PC-9 (cell line): ENCODE measurements at regions of chr5 and their contacts with region 1.

Region 1: DNA sequence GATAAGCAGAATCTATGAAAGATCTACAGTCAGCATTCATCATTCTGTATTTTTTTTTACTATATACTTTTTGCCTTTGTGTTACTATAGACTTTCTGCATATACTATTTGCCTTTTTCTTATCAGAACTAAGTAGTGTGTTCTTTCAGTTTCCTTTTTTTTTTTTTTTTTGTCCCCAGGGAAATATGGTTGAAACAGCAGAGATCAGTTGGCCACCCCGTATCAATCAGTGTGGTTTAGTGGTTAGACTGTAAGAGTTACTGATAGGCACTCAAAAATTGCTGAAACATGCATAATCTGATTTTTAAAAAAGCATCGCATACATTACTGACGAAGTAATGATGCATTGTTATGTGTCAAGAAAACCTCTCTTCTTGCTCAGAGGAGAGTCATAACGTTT is 990.8 kb upstream of the EDIL3 start:
- DNase-seq: no peak
- H3K4me3 ChIP-seq: no peak overlapping the region
- H3K27ac ChIP-seq: no peak overlapping the region
- H3K4me1 ChIP-seq: no peaks in the 10 kb centered on the region
- H3K27me3 ChIP-seq: no peaks in the 10 kb centered on the region
- CTCF ChIP-seq: no peak

Region 2: DNA sequence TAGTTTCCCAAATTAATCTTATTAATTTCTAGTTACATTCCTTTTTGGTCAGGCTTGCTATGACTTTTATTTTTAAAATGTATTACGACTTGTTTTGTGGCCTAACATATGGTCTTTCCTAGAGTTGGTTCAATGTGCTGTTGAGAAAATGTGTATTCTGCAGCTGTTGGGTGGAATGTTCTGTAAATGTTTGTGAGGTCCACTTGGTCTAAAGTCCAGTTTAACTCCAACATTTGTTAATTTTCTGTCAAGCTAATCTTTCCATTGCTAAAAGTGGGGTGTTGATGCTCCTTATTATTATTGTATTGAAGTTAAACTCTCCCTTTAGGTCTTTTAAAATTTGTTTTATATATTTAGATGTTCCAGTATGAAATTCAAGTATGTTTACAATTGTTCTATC is 20.0 kb after region 1 on chr5:
- CTCF ChIA-PET with region 1: no interaction called
- POLR2A ChIA-PET with region 1: no interaction called
- intact Hi-C with region 1: loop called (anchors 1 kb)
- DNase-seq: no peak
- H3K4me3 ChIP-seq: no peak overlapping the region
- H3K27ac ChIP-seq: no peak overlapping the region
- H3K4me1 ChIP-seq: no peaks in the 10 kb centered on the region
- H3K27me3 ChIP-seq: no peaks in the 10 kb centered on the region
- CTCF ChIP-seq: no peak